ENCODE measurements at regions of chr13 and their contacts with region 1.

Region 1: DNA sequence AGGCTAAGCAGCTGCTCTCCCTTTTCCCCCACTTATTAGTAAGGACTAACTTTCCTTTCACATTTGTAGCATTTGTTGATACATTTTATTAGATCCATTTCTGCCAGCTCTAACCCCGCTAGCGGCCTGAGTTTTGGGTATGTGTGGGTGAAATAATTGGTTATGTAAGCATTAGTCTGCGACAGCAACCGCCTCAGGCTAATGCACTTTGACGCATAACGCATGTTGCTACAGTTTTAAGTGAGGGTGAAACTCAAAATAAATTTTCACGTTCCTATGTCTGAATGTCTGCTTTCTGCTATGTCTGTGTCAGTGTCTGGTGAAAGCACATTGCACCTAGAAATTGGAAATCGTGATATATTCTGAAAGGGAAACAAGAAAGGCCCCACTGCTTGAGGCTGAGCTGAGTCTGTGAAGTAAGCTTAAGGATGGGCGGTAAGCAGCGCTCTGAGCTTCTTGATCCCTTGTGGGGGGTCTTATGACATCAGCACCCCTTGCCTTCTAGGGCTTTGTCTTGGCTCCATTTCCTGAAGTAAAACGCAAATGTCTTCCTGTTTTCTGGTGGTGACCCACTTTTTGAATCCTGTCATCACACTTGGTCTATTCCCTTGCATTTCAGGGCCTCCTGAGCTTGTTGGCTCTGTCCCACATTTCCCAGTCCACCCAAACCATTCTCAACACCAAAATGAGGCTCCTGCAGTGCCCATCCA is 648.3 kb upstream of the ARGLU1 start:
- DNase-seq: no peak
- ATAC-seq: no peak
- H3K4me3 ChIP-seq: no peak overlapping the region
- H3K4me3 Mint-ChIP-seq: no peak overlapping the region
- H3K27ac ChIP-seq: no peak overlapping the region
- H3K27ac Mint-ChIP-seq: no peak overlapping the region
- H3K4me1 ChIP-seq: no peaks in the 10 kb centered on the region
- H3K4me1 Mint-ChIP-seq: no peaks in the 10 kb centered on the region
- H3K27me3 ChIP-seq: no peaks in the 10 kb centered on the region
- H3K27me3 Mint-ChIP-seq: no peaks in the 10 kb centered on the region
- CTCF ChIP-seq: no peak

Region 2: DNA sequence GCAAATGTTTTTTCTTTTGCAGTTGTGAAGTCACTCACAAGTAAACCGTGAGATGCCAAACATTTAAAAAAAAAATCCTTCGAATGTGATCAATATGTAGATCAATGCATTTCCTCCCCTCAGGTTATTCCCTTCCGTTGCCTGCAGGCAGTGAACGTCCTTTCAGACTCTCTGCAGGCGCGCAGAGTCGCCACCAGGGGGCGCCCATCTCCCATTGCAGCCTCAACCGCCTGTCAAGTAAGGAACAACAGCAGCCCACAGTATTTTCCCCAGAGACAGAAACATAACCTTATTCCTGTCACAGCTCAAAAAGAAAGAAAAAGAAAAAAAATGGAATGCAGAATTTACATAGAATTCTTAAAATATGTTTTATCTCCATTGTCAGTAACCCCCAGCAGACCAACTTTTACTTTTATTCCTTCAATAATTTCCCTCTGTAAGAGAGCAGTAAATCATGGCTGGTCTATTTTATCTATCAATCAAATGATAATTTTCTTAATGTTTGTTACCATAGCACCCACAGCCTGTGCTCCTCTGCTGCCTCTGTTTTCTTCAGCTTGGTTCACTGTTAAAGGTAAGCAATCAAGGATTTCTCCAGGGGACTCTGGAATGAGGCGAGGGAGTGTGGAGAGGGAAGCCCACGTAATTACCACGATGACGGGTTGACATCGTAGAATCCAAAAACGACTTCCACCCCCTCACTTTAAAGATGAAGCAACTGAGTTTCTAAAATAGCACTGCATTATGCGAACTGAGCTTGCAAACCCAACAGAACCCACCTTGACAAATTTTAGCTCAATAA is 10.7 kb before region 1 on chr13:
- CTCF ChIA-PET with region 1: interaction called, 17 read pairs
- POLR2A ChIA-PET with region 1: no interaction called
- intact Hi-C with region 1: no loop called
- DNase-seq: peak; percentile 51
- ATAC-seq: peak; percentile 41
- H3K4me3 ChIP-seq: no peak overlapping the region
- H3K4me3 Mint-ChIP-seq: no peak overlapping the region
- H3K27ac ChIP-seq: no peak overlapping the region
- H3K27ac Mint-ChIP-seq: no peak overlapping the region
- H3K4me1 ChIP-seq: no peaks in the 10 kb centered on the region
- H3K4me1 Mint-ChIP-seq: no peaks in the 10 kb centered on the region
- H3K27me3 ChIP-seq: no peaks in the 10 kb centered on the region
- H3K27me3 Mint-ChIP-seq: no peaks in the 10 kb centered on the region
- CTCF ChIP-seq: peak; percentile 98